ENCODE measurements at regions of chr16 and their contacts with region 1.

Region 1: GRCh38 chr16:50593410-50594150 is 45.4 kb downstream of the NKD1 start:
- DNase-seq: peak; percentile 11
- ATAC-seq: no peak

Region 2: GRCh38 chr16:49396206-49396725 is 1197.3 kb before region 1 on chr16:
- intact Hi-C with region 1: no loop called
- DNase-seq: no peak
- ATAC-seq: no peak

Region 3: GRCh38 chr16:50681021-50681885 is 87.7 kb after region 1 on chr16 and contains the start of gene SNX20:
- intact Hi-C with region 1: no loop called
- DNase-seq: no peak
- ATAC-seq: peak; percentile 60 to 64
- total RNA-seq, gene SNX20: 1.2 to 2.0 TPM

Region 4: DNA sequence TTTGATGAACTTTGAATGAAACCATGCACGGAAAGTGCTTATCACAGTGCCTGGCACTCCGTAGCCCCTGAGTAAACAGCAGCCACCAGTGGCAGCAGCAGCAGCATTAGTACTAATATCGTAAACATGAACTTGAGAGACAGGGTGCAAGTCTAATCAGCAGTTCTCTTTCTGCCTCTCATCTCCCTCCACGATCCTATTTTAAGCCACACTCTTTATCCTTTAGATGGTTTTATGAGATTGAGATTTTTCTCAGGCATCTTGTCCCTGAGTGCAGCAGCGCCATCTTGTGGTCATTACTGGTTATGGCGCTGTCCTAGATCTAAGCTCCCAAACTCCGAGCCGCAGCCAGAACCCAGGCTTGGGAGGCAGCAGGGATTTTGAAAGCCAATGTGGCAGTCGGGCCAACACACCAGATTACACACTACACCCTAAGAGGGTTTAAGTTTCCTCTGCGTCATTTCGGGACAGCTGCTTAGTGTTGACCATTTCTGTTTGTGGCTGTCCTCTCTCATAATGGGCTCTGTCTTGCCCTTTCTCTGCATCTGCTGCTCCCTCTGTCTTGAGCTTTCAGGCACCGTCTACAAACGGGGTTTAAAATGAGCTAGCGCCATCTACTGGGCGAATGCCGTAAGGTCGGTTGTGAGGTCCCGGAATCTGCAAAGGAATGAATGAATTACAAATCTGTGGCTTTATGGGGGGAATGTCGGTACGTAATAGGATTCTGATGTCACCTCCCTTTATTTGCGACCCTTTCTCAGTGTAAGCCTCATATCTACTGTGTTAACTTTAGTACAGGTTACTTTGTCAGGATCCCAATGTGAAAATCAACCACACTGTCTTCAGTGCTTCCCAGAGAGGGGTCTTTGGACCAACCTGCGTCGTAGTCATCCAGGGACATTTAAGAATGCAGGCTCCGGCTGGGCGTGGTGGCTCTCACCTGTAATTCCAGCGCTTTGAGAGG is 212.8 kb after region 1 on chr16:
- intact Hi-C with region 1: loop called in 1 of 2 experiments (anchors 10 kb)
- DNase-seq: peak; percentile 83
- ATAC-seq: peak; percentile 93 to 94

Measured in left cardiac atrium (tissue), 4 donors.